Activated CD8-positive, alpha-beta T cell treated with anti-CD3 and anti-CD28 coated beads for 36 hours (primary cell): ENCODE measurements at regions of chr3 and their contacts with region 1.

Region 1: DNA sequence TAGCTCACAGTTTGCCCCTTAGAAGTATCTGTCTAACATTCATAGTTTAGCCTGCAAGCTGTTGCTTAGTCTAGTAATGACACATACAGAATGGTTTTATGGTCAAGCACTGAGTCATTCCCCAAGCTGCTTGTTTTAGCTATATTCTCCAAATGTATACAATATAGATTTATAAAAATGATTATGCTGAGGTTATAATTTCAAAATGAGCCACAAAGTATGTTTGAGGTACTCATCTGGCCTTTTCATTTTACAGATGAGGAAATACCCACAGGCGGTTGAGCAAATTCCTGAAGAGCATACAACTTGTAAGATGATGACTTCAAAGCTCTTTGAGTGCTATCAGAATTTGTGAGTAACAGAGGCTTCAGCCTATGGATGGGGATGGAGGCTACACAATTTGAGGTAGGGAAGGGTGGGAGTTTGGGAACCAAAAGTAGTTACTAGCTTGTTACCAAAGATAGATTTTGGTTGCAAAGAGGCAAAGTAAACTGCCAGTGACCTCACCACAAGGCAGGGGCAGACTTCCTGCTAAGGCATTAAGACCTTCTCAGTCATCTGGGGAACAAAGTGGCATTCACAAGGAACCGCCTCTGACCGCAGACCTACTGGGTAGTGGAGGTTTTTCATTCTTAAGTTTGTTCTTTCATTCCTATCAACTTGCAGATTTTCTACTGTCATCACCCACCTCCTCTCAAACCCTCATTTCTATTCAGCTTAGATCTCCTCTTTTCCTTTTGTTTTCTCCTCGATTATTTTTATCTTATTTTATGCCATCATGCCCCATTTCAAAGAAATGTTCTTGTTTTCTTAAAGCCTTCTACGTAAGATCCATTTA is 257.2 kb upstream of the NECTIN3 start:
- DNase-seq: peak; percentile 76
- ATAC-seq: peak; percentile 86
- H3K4me3 Mint-ChIP-seq: peak overlapping the region; percentile 27
- H3K27ac Mint-ChIP-seq: peak overlapping the region; percentile 80
- H3K4me1 Mint-ChIP-seq: peaks cover 14% of the 10 kb centered on the region
- H3K27me3 Mint-ChIP-seq: peaks cover 23% of the 10 kb centered on the region
- CTCF ChIP-seq: no peak

Region 2: GRCh38 chr3:110849060-110849459 is 34.7 kb after region 1 on chr3:
- CTCF ChIA-PET with region 1: no interaction called
- POLR2A ChIA-PET with region 1: no interaction called
- intact Hi-C with region 1: no loop called
- DNase-seq: no peak
- ATAC-seq: no peak
- H3K4me3 Mint-ChIP-seq: no peak overlapping the region
- H3K27ac Mint-ChIP-seq: no peak overlapping the region
- H3K4me1 Mint-ChIP-seq: no peaks in the 10 kb centered on the region
- H3K27me3 Mint-ChIP-seq: peaks cover 6% of the 10 kb centered on the region
- CTCF ChIP-seq: no peak

Region 3: DNA sequence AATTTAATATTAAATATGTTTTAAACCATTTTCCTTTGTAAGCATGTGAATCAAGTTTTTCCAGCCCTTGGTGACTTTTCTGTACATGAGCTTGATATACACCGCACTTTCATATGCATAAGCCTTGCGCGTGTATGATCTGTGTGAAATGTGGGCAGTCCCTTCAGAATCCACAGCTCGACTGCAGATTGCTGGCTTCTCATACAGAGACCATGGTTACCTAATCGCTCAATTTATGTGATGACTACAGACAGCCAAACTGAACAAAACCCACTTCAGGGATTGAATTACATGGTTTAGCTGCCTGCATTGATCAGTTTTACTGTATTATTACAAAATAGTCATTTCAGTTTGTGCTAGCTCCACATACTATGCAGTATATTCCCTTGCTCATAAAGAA is 44.9 kb after region 1 on chr3:
- CTCF ChIA-PET with region 1: no interaction called
- POLR2A ChIA-PET with region 1: no interaction called
- intact Hi-C with region 1: no loop called
- DNase-seq: no peak
- ATAC-seq: no peak
- H3K4me3 Mint-ChIP-seq: no peak overlapping the region
- H3K27ac Mint-ChIP-seq: no peak overlapping the region
- H3K4me1 Mint-ChIP-seq: no peaks in the 10 kb centered on the region
- H3K27me3 Mint-ChIP-seq: no peaks in the 10 kb centered on the region
- CTCF ChIP-seq: no peak

Region 4: DNA sequence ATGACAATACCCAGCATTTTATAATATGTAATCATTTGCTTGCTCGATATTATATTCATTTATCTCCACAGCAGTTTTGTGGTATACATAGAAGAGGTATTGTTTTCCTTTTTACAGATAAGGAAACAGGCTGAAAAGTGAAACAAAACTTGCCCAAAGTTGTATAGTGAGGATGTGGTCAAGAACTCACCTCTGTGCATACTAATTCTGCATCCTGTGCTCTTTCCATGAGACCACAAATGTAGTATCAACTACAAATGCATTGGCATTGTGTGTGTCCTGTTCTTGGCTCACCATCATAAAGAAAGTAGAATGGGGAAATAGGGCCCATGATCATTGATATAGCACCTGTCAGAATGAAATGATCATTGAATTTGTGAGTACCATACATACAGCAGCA is 424.5 kb after region 1 on chr3:
- CTCF ChIA-PET with region 1: no interaction called
- POLR2A ChIA-PET with region 1: no interaction called
- intact Hi-C with region 1: loop called (anchors 10 kb)
- DNase-seq: peak; percentile 27
- ATAC-seq: peak; percentile 96
- H3K4me3 Mint-ChIP-seq: no peak overlapping the region
- H3K27ac Mint-ChIP-seq: no peak overlapping the region
- H3K4me1 Mint-ChIP-seq: peaks cover 30% of the 10 kb centered on the region
- H3K27me3 Mint-ChIP-seq: no peaks in the 10 kb centered on the region
- CTCF ChIP-seq: no peak